Activated naive CD4-positive, alpha-beta T cell treated with anti-CD3 and anti-CD28 coated beads for 36 hours (primary cell): ENCODE measurements at regions of chr5 and their contacts with region 1.

Region 1: DNA sequence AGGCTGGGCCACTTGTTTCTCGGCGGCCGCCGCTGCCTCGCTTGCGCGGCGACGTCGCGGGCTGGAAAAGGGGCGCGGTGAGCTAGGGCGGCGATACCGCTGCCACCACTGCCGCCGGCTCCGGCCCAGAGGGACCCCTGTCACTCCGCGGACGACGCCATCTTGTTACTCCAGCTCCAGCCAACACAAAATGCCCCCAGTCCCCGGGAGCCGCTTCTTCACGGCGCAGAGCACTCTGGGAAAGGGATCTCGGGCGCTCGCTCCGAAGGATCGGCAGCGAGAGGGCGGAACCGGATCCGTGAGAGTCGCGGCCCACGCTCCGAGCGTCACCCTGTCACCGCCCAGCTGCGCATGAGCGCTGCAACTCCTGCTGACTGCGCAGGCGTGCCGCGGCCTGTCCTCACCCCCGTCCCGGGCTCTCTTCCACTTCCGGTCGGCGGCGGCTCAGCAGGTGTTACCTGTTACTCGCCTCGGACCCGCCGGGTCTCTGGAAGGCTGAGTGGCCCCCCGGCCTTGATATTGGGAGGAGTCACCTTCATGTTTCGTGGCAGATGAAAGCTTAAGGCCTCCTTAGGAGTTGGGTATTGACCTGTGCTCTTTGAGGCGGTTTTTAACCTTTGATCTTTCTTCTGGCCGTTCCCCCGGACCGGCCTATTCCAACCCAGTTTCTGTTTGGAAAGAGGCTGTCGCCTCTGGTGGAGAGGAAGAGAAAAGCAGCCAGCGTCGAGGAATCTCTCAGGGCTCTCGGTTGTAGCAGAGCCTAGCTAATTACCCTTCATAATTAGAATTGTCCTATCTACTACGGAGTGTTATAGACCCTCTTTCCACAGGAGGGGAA is at the start of gene CSNK1A1:
- DNase-seq: peak; percentile 99
- H3K4me3 Mint-ChIP-seq: peak within 1 kb of the TSS; percentile 97
- H3K27ac Mint-ChIP-seq: peak within 1 kb of the TSS; percentile 99
- H3K4me1 Mint-ChIP-seq: peaks cover 32% of the 10 kb centered on the region
- H3K27me3 Mint-ChIP-seq: no peaks in the 10 kb centered on the region
- total RNA-seq, gene CSNK1A1: 183 to 188 TPM

Region 2: DNA sequence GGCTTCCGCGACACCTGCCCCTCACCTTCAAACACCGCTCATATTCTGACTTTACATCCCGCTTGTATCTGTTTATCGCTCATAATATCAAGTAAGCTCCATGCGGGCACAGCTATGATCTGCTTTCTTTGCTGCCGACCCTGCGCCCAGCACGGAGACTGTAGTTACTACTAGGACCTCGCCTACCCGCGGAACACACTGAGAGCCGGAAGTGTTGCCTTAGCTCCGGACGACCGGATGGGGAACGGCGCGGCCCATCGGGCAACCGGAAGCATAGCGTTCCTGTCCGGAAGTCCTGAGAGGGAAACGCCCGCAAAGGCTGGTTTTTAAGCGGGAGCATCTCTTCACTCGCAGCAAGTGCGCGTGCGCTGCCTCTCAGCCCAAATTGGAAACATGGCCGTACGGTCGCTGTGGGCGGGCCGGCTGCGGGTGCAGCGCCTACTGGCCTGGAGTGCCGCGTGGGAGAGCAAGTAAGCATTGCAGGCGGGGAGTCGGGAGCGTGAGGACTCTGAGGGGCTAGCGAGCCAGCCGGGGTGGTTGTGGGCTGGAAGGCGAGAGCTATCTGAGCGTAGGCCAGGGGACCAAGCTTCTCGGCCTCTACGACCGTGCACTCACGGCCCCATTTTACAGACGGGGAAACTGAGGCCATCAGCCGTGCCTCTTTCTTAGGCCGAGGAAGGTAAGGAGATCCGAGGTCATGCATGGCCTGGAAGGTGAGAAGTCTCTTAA is 206.1 kb before region 1 on chr5 and contains the start of gene GRPEL2:
- CTCF ChIA-PET with region 1: interaction called, 3 read pairs
- intact Hi-C with region 1: loop called (anchors 1 kb)
- DNase-seq: peak; percentile 97
- H3K4me3 Mint-ChIP-seq: peak within 1 kb of the TSS; percentile 91
- H3K27ac Mint-ChIP-seq: peak within 1 kb of the TSS; percentile 95
- H3K4me1 Mint-ChIP-seq: peaks cover 52% of the 10 kb centered on the region
- H3K27me3 Mint-ChIP-seq: no peaks in the 10 kb centered on the region
- total RNA-seq, gene GRPEL2: 44.7 to 49.6 TPM

Region 3: DNA sequence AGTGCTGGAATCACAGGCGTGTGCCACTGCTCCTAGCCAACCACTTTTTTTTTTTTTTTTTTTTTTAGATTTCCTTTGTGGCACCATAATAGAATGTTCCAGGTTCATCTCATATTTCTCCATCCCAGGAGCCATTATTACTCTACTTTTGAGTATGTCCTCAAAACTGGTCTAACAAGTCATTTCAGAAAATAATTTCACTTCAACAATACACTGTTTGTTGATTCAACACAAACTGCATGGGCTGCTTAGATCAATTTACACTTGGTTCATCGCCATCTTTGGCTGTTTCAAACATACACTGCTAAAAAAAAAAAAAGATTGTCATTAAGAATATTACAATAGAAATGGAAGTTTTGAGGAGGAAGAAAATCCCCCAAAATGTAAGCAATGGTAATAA is 58.1 kb before region 1 on chr5:
- CTCF ChIA-PET with region 1: no interaction called
- intact Hi-C with region 1: loop called (anchors 2 kb)
- DNase-seq: no peak
- H3K4me3 Mint-ChIP-seq: no peak overlapping the region
- H3K27ac Mint-ChIP-seq: no peak overlapping the region
- H3K4me1 Mint-ChIP-seq: peaks cover 8% of the 10 kb centered on the region
- H3K27me3 Mint-ChIP-seq: no peaks in the 10 kb centered on the region

Region 4: DNA sequence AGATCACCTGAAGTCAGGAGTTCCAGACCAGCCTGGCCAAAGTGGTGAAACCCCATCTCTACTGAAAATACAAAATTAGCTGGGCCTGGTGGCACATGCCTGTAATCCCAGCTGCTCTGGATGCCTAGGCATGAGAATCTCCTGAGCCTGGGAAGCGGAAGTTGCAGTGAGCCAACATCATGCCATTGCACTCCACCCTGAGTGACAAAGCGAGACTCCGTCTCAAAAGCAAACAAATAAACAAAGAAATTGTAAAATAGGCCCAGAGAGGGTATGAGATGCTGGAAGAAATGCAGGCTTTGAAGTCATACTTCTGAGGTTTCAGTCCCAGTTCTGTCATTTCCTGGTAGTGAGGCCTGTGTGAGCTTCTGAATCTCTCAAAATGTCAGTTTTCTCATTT is 24.6 kb after region 1 on chr5:
- CTCF ChIA-PET with region 1: interaction called, 5 read pairs
- intact Hi-C with region 1: loop called (anchors 1 kb)
- DNase-seq: peak; percentile 66
- H3K4me3 Mint-ChIP-seq: no peak overlapping the region
- H3K27ac Mint-ChIP-seq: peak overlapping the region; percentile 89
- H3K4me1 Mint-ChIP-seq: peaks cover 34% of the 10 kb centered on the region
- H3K27me3 Mint-ChIP-seq: no peaks in the 10 kb centered on the region

Region 5: GRCh38 chr5:150357326-150358260 is 806.2 kb after region 1 on chr5 and contains the start of gene TCOF1:
- CTCF ChIA-PET with region 1: no interaction called
- intact Hi-C with region 1: loop called (anchors 5 kb)
- DNase-seq: peak; percentile 98
- H3K4me3 Mint-ChIP-seq: peak within 1 kb of the TSS; percentile 87
- H3K27ac Mint-ChIP-seq: peak within 1 kb of the TSS; percentile 82
- H3K4me1 Mint-ChIP-seq: peaks cover 41% of the 10 kb centered on the region
- H3K27me3 Mint-ChIP-seq: no peaks in the 10 kb centered on the region
- total RNA-seq, gene TCOF1: 114 to 115 TPM